Activated naive CD4-positive, alpha-beta T cell treated with anti-CD3 and anti-CD28 coated beads, Interleukin-2, amount 10 ng/mL, durations not matched to agents 7 days and 5 days (primary cell): ENCODE measurements at regions of chr1 and their contacts with region 1.

Region 1: DNA sequence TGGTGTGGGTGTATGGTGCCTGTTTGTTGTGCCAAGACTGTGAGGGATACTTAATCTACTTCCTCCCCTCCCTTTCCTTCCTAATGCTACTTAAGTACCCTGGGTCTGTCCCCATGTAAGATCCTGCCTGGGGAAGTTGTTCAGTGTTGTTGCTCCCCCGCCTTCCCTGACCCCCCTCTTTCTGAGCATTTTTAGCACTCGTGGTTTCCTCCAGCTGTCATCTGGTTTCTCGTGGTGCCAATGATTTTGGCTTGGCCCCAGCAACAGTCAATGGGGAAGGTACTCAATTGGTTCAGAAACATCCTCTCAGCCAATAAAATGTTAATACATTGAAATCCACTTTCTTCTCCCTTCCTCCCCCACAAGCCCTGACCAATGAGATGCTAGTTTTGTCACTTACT is 8.0 kb upstream of the B4GALT3 start:
- DNase-seq: peak; percentile 91
- H3K4me3 Mint-ChIP-seq: peak overlapping the region; percentile 59
- H3K27ac Mint-ChIP-seq: peak overlapping the region; percentile 98
- H3K4me1 Mint-ChIP-seq: peaks cover 81% of the 10 kb centered on the region
- H3K27me3 Mint-ChIP-seq: no peaks in the 10 kb centered on the region

Region 2: DNA sequence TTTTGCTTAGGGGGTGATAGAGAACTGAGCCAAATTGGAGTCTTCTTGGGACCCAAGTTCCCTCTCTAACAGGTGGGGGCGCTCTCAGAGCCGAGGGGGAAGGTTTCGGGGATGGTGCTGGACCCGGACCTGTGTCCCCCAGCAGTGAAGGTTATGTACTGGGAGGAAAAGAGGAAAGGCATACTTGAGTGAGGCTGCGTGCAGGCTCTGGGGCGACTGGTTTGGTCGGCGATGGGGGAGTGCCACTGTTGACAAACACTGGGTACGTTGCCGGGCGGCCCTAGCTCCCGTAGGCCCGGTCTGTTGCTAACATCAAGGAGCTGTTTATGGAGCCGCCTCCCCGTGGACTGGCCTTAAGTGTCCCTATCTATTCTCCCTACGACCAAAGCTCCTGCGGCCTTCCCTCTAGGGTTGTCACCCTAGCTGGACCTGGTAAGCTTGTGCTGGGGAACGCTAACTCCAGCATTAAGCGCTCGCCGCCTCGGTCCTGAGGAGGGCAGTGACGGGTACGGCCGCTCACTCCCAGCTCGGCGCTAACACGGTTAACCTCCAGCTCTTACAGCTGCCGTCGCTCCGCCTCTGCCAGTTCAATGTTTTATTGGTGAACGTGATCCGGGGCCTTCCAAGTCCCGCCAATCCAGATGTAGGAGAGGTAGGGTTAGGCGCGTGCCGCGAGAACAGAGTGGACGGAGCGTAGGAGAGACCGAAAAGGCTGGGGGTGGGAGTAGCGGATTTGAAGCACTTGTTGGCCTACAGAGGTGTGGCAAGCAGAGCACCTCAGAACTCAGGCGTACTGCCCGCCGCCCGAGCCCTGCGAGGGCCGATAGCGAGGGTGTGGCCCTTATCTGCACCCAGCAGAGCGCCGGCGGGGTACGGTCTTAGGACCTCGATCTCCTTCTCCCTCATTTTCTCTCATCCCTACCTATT is 19.3 kb before region 1 on chr1 and contains the start of gene PPOX:
- CTCF ChIA-PET with region 1: interaction called, 27 read pairs
- DNase-seq: peak; percentile 97
- H3K4me3 Mint-ChIP-seq: peak within 1 kb of the TSS; percentile 74
- H3K27ac Mint-ChIP-seq: peak within 1 kb of the TSS; percentile 97
- H3K4me1 Mint-ChIP-seq: peaks cover 45% of the 10 kb centered on the region
- H3K27me3 Mint-ChIP-seq: no peaks in the 10 kb centered on the region

Region 3: GRCh38 chr1:161209790-161210409 is 24.6 kb after region 1 on chr1:
- CTCF ChIA-PET with region 1: interaction called, 12 read pairs
- DNase-seq: peak; percentile 83
- H3K4me3 Mint-ChIP-seq: no peak overlapping the region
- H3K27ac Mint-ChIP-seq: peak overlapping the region; percentile 82
- H3K4me1 Mint-ChIP-seq: peaks cover 47% of the 10 kb centered on the region
- H3K27me3 Mint-ChIP-seq: no peaks in the 10 kb centered on the region

Region 4: GRCh38 chr1:161216945-161217712 is 31.8 kb after region 1 on chr1:
- CTCF ChIA-PET with region 1: interaction called, 12 read pairs
- DNase-seq: no peak
- H3K4me3 Mint-ChIP-seq: no peak overlapping the region
- H3K27ac Mint-ChIP-seq: no peak overlapping the region
- H3K4me1 Mint-ChIP-seq: peaks cover 52% of the 10 kb centered on the region
- H3K27me3 Mint-ChIP-seq: peaks cover 5% of the 10 kb centered on the region